ENCODE measurements at regions of chr14 and their contacts with region 1.

Region 1: GRCh38 chr14:105627711-105628110 is 101.3 kb downstream of the TMEM121 start:
- DNase-seq: no peak
- H3K4me3 ChIP-seq: no peak overlapping the region
- H3K27ac ChIP-seq: no peak overlapping the region
- H3K4me1 ChIP-seq: peaks cover 25% of the 10 kb centered on the region
- H3K27me3 ChIP-seq: no peaks in the 10 kb centered on the region
- CTCF ChIP-seq: no peak

Region 2: GRCh38 chr14:105411017-105411941 is 216.4 kb before region 1 on chr14:
- CTCF ChIA-PET with region 1: no interaction called
- POLR2A ChIA-PET with region 1: interaction called, 16 read pairs
- intact Hi-C with region 1: no loop called
- DNase-seq: peak; percentile 62
- H3K4me3 ChIP-seq: peak overlapping the region; percentile 31
- H3K27ac ChIP-seq: no peak overlapping the region
- H3K4me1 ChIP-seq: peaks cover 12% of the 10 kb centered on the region
- H3K27me3 ChIP-seq: no peaks in the 10 kb centered on the region
- CTCF ChIP-seq: no peak

Measured in A673 (cell line).